Esophagus muscularis mucosa (tissue), 4 donors: ENCODE measurements at regions of chr7 and their contacts with region 1.

Region 1: DNA sequence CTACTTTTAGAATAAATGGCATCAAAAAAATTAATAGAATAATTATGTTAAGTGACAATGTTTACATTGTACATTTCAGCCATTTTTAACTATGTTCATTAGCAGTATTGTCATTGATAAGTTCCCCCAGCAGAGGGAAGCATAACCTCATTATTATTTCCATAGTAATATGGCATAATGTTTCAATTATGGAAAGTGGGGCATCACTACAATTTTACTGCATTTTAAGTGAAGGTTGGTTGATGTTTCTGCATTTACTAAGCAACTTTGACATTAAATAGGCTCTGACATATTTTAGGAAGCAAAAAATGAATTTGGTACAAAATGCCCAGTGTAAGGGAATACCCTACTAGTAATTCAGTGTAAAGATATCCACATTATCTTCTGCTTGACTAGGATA is 218.3 kb downstream of the SEMA3A start:
- DNase-seq: no peak
- H3K4me3 ChIP-seq: no peak overlapping the region
- H3K27ac ChIP-seq: no peak overlapping the region
- H3K4me1 ChIP-seq: peaks cover 0 to 7% (median 2%) of the 10 kb centered on the region in 4 donors
- H3K27me3 ChIP-seq: no peaks in the 10 kb centered on the region
- CTCF ChIP-seq: peak; percentile 67 to 69 (median 69)
- EP300 ChIP-seq: no peak
- POLR2A ChIP-seq: no peak

Region 2: DNA sequence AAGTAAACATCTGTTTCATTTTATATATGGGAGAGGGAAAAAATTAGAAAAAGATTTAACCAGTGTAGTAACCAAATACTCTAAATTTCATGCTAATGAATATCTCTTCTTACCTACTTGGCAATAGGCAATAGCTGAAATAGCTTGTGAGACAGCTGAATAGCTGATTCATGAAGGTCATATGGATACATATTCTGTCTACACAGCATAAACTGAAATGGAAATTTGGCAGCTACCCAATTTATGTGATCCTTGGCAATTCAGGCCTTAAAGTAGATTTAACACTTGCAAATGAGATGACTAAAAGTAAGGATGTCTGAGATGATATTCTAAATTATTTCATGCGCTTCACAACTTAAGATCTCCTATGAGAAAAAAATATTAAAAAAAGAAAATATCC is 479.5 kb after region 1 on chr7:
- intact Hi-C with region 1: loop called (anchors 10 kb)
- DNase-seq: no peak
- H3K4me3 ChIP-seq: no peak overlapping the region
- H3K27ac ChIP-seq: no peak overlapping the region
- H3K4me1 ChIP-seq: peaks cover 0 to 6% (median 0%) of the 10 kb centered on the region in 4 donors
- H3K27me3 ChIP-seq: no peaks in the 10 kb centered on the region
- CTCF ChIP-seq: no peak
- EP300 ChIP-seq: no peak
- POLR2A ChIP-seq: no peak